PC-9 (cell line): ENCODE measurements at regions of chr6 and their contacts with region 1.

Region 1: GRCh38 chr6:42217519-42218367 is at the start of gene MRPS10:
- DNase-seq: peak; percentile 89 to 91
- H3K4me3 ChIP-seq: peak within 1 kb of the TSS; percentile 96
- H3K27ac ChIP-seq: peak within 1 kb of the TSS; percentile 76
- H3K4me1 ChIP-seq: peaks cover 59% of the 10 kb centered on the region
- H3K27me3 ChIP-seq: no peaks in the 10 kb centered on the region
- CTCF ChIP-seq: no peak
- total RNA-seq, gene MRPS10: 38.7 and 56.5 TPM in 2 replicates

Region 2: GRCh38 chr6:42075159-42075838 is 142.4 kb before region 1 on chr6:
- CTCF ChIA-PET with region 1: interaction called, 3 read pairs
- POLR2A ChIA-PET with region 1: no interaction called
- intact Hi-C with region 1: loop called (anchors 1 kb)
- DNase-seq: peak; percentile 72 to 87
- H3K4me3 ChIP-seq: no peak overlapping the region
- H3K27ac ChIP-seq: no peak overlapping the region
- H3K4me1 ChIP-seq: 0 out of 2 replicates have a peak, but pooled peaks cover 4% of the 10 kb centered on the region
- H3K27me3 ChIP-seq: no peaks in the 10 kb centered on the region
- CTCF ChIP-seq: peak; percentile 95

Region 3: GRCh38 chr6:42338663-42339218 is 121.0 kb after region 1 on chr6:
- CTCF ChIA-PET with region 1: no interaction called
- POLR2A ChIA-PET with region 1: no interaction called
- intact Hi-C with region 1: no loop called
- DNase-seq: peak; percentile 70 to 97
- H3K4me3 ChIP-seq: peak overlapping the region; percentile 15; the same call in 1 of the 2 replicates
- H3K27ac ChIP-seq: peak overlapping the region; percentile 93
- H3K4me1 ChIP-seq: peaks cover 39% of the 10 kb centered on the region
- H3K27me3 ChIP-seq: no peaks in the 10 kb centered on the region
- CTCF ChIP-seq: no peak

Region 4: GRCh38 chr6:42460883-42461282 is 243.1 kb after region 1 on chr6:
- CTCF ChIA-PET with region 1: interaction called, 10 read pairs
- POLR2A ChIA-PET with region 1: no interaction called
- intact Hi-C with region 1: no loop called
- DNase-seq: no peak
- H3K4me3 ChIP-seq: no peak overlapping the region
- H3K27ac ChIP-seq: no peak overlapping the region
- H3K4me1 ChIP-seq: no peaks in the 10 kb centered on the region
- H3K27me3 ChIP-seq: no peaks in the 10 kb centered on the region
- CTCF ChIP-seq: no peak

Region 5: GRCh38 chr6:42547407-42548329 is 329.9 kb after region 1 on chr6:
- CTCF ChIA-PET with region 1: interaction called, 8 read pairs
- POLR2A ChIA-PET with region 1: no interaction called
- intact Hi-C with region 1: loop called (anchors 2 kb)
- DNase-seq: peak in 1 of 2 experiments; percentile 83
- H3K4me3 ChIP-seq: peak overlapping the region; percentile 51; the same call in 1 of the 2 replicates
- H3K27ac ChIP-seq: no peak overlapping the region
- H3K4me1 ChIP-seq: no peaks in the 10 kb centered on the region
- H3K27me3 ChIP-seq: no peaks in the 10 kb centered on the region
- CTCF ChIP-seq: peak; percentile 96

Region 6: GRCh38 chr6:42563697-42564505 is 346.2 kb after region 1 on chr6 and contains the start of gene UBR2:
- CTCF ChIA-PET with region 1: no interaction called
- POLR2A ChIA-PET with region 1: no interaction called
- intact Hi-C with region 1: loop called (anchors 5 kb)
- DNase-seq: peak; percentile 94 to 97
- H3K4me3 ChIP-seq: peak within 1 kb of the TSS; percentile 65
- H3K27ac ChIP-seq: peak within 1 kb of the TSS; percentile 76
- H3K4me1 ChIP-seq: peaks cover 16% of the 10 kb centered on the region
- H3K27me3 ChIP-seq: no peaks in the 10 kb centered on the region
- CTCF ChIP-seq: peak; percentile 65
- total RNA-seq, gene UBR2: 20.5 and 21.1 TPM in 2 replicates